ENCODE measurements at regions of chr1 and their contacts with region 1.

Region 1: GRCh38 chr1:219751870-219752507 is 139.1 kb upstream of the ZC3H11B start:
- DNase-seq: no peak
- ATAC-seq: peak in 1 of 2 donors; percentile 48

Region 2: GRCh38 chr1:219670426-219671149 is 81.4 kb before region 1 on chr1:
- intact Hi-C with region 1: loop called in 1 of 2 experiments (anchors 5 kb)
- DNase-seq: peak; percentile 80
- ATAC-seq: peak; percentile 91 to 97